PC-9 (cell line): ENCODE measurements at regions of chr10 and their contacts with region 1.

Region 1: GRCh38 chr10:77582710-77583115 is 54.9 kb downstream of the KCNMA1 start:
- DNase-seq: peak; percentile 91 to 96
- H3K4me3 ChIP-seq: no peak overlapping the region
- H3K27ac ChIP-seq: peak overlapping the region; percentile 88
- H3K4me1 ChIP-seq: peaks cover 63% of the 10 kb centered on the region
- H3K27me3 ChIP-seq: no peaks in the 10 kb centered on the region
- CTCF ChIP-seq: no peak

Region 2: DNA sequence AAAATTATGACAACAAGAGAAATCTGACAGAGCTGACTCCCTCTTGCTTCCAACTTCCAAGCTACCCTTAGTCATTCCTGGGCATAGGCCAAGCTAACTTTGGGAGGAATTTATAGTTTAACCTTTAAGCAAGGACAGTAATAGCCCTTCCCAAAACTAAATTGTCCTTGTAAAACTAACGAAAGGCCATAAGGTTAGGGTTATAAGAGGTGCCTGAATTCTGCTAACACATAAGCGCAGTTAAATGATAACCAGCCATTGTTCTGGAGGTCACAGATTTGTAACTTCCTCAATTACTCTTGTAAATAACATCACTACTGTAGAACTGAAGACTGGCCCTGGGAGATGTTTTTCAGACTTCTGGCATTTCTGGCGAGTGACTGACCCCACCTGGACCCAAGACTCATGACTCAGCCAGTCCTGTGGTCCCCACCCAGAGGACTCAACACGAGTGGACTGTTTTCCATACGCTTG is 426.3 kb before region 1 on chr10:
- CTCF ChIA-PET with region 1: no interaction called
- POLR2A ChIA-PET with region 1: no interaction called
- intact Hi-C with region 1: no loop called
- DNase-seq: no peak
- H3K4me3 ChIP-seq: no peak overlapping the region
- H3K27ac ChIP-seq: no peak overlapping the region
- H3K4me1 ChIP-seq: peaks cover 15% of the 10 kb centered on the region
- H3K27me3 ChIP-seq: no peaks in the 10 kb centered on the region
- CTCF ChIP-seq: no peak

Region 3: GRCh38 chr10:77405771-77406241 is 176.9 kb before region 1 on chr10:
- CTCF ChIA-PET with region 1: no interaction called
- POLR2A ChIA-PET with region 1: no interaction called
- intact Hi-C with region 1: loop called (anchors 5 kb)
- DNase-seq: peak; percentile 72 to 85
- H3K4me3 ChIP-seq: no peak overlapping the region
- H3K27ac ChIP-seq: no peak overlapping the region
- H3K4me1 ChIP-seq: peaks cover 35% of the 10 kb centered on the region
- H3K27me3 ChIP-seq: no peaks in the 10 kb centered on the region
- CTCF ChIP-seq: no peak

Region 4: DNA sequence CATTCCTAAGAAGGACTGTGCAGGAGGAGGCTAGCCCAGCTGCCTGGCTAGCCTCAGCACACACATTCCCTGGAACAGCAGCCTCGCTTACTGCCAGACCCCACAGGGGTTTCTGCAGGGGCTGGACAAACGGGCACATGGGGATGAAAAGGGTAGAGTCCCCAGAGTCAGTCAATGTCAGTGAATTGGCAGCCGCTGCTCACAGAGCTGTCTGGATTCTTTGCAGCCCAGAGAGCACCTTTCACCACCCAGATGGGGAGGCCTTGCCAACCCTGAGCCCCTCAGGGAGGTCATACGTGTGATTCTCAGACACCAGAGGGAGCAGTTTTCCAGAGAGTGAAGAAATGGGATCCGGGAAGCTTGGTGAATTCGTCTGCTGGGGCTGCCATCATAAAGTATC is 88.4 kb before region 1 on chr10:
- CTCF ChIA-PET with region 1: no interaction called
- POLR2A ChIA-PET with region 1: no interaction called
- intact Hi-C with region 1: no loop called
- DNase-seq: no peak
- H3K4me3 ChIP-seq: no peak overlapping the region
- H3K27ac ChIP-seq: no peak overlapping the region
- H3K4me1 ChIP-seq: peaks cover 10% of the 10 kb centered on the region; the same call in 1 of the 2 replicates
- H3K27me3 ChIP-seq: no peaks in the 10 kb centered on the region
- CTCF ChIP-seq: peak; percentile 49; the same call in 1 of the 2 replicates

Region 5: GRCh38 chr10:77539176-77539935 is 43.4 kb before region 1 on chr10:
- CTCF ChIA-PET with region 1: no interaction called
- POLR2A ChIA-PET with region 1: no interaction called
- intact Hi-C with region 1: loop called (anchors 1 kb)
- DNase-seq: peak; percentile 33 to 90
- H3K4me3 ChIP-seq: no peak overlapping the region
- H3K27ac ChIP-seq: no peak overlapping the region
- H3K4me1 ChIP-seq: peaks cover 24% of the 10 kb centered on the region
- H3K27me3 ChIP-seq: no peaks in the 10 kb centered on the region
- CTCF ChIP-seq: no peak

Region 6: GRCh38 chr10:77555591-77556212 is 27.0 kb before region 1 on chr10:
- CTCF ChIA-PET with region 1: no interaction called
- POLR2A ChIA-PET with region 1: no interaction called
- intact Hi-C with region 1: no loop called
- DNase-seq: no peak
- H3K4me3 ChIP-seq: no peak overlapping the region
- H3K27ac ChIP-seq: no peak overlapping the region
- H3K4me1 ChIP-seq: no peaks in the 10 kb centered on the region
- H3K27me3 ChIP-seq: no peaks in the 10 kb centered on the region
- CTCF ChIP-seq: no peak